Calu3 (cell line): ENCODE measurements at regions of chr3 and their contacts with region 1.

Region 1: GRCh38 chr3:184229394-184230080 is at the start of gene VWA5B2:
- DNase-seq: peak; percentile 92
- H3K4me3 Mint-ChIP-seq: peak within 1 kb of the TSS; percentile 8
- H3K27ac Mint-ChIP-seq: no peak within 1 kb of the TSS
- H3K4me1 Mint-ChIP-seq: peaks cover 8% of the 10 kb centered on the region
- H3K27me3 Mint-ChIP-seq: peaks cover 78% of the 10 kb centered on the region
- CTCF ChIP-seq: peak; percentile 62
- total RNA-seq, gene VWA5B2: 0.54 and 0.90 TPM in 2 replicates

Region 2: DNA sequence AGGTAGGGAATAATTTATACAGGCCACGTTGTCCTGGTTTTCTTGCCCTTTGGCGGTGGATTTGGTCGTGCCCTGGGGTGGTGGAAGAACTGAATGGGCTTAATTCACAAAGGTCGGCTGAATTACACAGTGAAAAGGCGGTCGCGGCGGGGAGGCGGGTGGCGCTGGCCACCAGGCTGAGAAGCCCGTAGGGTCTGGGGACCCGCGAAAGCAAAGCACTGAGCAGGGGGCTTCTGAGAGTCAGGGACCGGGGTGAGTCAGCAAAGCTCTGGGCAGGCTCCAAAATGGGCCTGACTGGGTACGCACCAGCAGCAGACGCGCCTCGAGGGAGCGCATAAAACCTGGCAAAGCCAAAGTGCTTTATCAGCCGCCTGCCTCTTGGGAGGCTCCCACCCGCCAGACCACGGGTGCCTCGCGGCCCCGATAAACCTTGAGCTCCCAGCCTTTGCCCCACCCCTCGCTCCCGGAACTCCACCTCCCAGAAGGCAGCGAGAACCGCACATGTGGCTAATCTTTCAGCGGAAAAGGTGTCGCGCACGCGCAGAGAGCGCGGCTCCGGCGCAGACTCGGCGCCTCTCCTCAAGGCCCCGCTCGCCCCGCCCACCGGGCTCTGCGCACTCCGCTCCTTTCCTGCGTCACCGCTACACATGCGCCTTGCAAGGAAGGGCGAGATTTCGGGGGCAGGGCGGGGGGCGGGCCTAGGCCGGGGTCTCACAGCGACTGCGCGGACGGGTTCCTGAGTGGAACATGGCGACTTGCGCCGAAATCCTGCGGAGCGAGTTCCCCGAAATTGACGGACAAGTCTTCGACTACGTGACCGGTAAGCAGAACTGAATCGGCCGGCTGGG is 43.9 kb before region 1 on chr3 and contains the start of gene ABCF3:
- CTCF ChIA-PET with region 1: interaction called, 9 read pairs
- intact Hi-C with region 1: loop called (anchors 2 kb)
- DNase-seq: peak; percentile 100
- H3K4me3 Mint-ChIP-seq: peak within 1 kb of the TSS; percentile 100
- H3K27ac Mint-ChIP-seq: peak within 1 kb of the TSS; percentile 96
- H3K4me1 Mint-ChIP-seq: peaks cover 27% of the 10 kb centered on the region
- H3K27me3 Mint-ChIP-seq: no peaks in the 10 kb centered on the region
- CTCF ChIP-seq: no peak
- total RNA-seq, gene ABCF3: 114 and 116 TPM in 2 replicates

Region 3: DNA sequence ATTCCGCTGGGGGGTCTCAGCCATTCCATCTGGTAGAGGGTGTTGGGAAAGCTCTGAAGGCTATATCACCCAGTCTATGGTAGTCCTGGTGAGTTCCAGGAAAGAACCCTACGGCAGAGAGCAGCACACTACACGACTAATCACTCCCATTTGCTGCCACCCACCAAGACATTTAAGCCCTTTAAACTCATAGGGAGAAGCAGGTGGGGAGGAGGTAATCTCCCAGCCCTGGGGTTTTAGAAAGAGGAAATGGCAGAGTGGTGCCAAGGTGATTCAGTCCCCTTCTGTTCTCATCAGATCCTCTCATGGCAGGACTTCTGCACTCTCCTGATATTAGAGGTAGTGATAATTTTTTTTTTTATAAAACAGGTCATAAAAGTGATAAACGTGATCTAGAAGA is 10.7 kb before region 1 on chr3:
- CTCF ChIA-PET with region 1: interaction called, 10 read pairs
- intact Hi-C with region 1: no loop called
- DNase-seq: no peak
- H3K4me3 Mint-ChIP-seq: no peak overlapping the region
- H3K27ac Mint-ChIP-seq: no peak overlapping the region
- H3K4me1 Mint-ChIP-seq: no peaks in the 10 kb centered on the region
- H3K27me3 Mint-ChIP-seq: peaks cover 28% of the 10 kb centered on the region
- CTCF ChIP-seq: no peak

Region 4: GRCh38 chr3:184241447-184242296 is 12.1 kb after region 1 on chr3:
- CTCF ChIA-PET with region 1: interaction called, 29 read pairs
- intact Hi-C with region 1: no loop called
- DNase-seq: peak; percentile 94
- H3K4me3 Mint-ChIP-seq: peak overlapping the region; percentile 56
- H3K27ac Mint-ChIP-seq: no peak overlapping the region
- H3K4me1 Mint-ChIP-seq: no peaks in the 10 kb centered on the region
- H3K27me3 Mint-ChIP-seq: peaks cover 39% of the 10 kb centered on the region
- CTCF ChIP-seq: peak; percentile 94

Region 5: DNA sequence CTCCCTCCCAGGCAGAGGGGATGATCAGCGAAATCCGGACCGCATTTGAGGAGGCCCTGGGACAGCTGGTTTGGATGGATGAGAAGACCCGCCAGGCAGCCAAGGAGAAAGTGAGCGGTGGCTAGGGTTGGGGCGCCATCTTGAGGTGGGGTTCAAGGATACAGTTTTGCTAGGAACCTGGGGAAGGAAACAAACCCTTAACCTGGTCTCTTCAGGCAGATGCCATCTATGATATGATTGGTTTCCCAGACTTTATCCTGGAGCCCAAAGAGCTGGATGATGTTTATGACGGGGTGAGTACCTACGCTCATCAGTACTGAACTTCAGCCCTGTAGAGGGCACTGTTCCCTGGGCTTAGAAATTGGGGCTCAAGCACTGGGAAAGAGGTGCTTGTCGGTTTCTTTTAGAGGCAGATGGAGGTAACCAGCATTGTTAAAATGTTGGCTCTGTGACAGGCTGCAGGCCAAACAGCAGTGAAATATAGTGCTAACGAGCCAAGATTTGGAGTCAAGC is 59.9 kb after region 1 on chr3:
- CTCF ChIA-PET with region 1: interaction called, 6 read pairs
- intact Hi-C with region 1: loop called (anchors 1 kb)
- DNase-seq: peak; percentile 90
- H3K4me3 Mint-ChIP-seq: no peak overlapping the region
- H3K27ac Mint-ChIP-seq: no peak overlapping the region
- H3K4me1 Mint-ChIP-seq: no peaks in the 10 kb centered on the region
- H3K27me3 Mint-ChIP-seq: peaks cover 72% of the 10 kb centered on the region
- CTCF ChIP-seq: peak; percentile 97

Region 6: DNA sequence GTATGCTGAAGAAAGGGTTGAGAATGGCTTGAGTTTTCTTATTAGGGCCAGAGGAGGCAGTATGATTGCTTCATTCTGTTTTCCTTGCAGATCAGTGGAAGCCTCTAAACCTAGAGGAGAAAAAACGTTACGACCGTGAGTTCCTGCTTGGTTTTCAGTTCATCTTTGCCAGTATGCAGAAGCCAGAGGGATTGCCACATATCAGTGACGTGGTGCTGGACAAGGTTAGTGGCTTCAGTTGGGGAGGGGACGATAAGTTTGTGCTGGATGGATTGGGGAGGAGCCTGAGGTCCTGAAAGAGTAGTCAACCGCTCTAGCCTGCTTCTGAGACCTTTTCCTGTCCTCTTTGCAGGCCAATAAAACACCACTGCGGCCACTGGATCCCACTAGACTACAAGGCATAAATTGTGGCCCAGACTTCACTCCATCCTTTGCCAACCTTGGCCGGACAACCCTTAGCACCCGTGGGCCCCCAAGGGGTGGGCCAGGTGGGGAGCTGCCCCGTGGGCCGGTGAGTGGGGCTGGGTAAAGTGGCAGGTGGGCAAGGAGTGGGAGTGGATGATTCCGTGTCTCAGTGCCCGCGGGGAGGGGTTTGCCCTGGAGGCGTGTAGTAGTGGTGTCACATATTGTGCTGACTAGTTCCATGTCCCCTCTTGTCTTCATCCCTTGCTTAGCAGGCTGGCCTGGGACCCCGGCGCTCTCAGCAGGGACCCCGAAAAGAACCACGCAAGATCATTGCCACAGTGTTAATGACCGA is 93.4 kb after region 1 on chr3:
- CTCF ChIA-PET with region 1: no interaction called
- intact Hi-C with region 1: no loop called
- DNase-seq: no peak
- H3K4me3 Mint-ChIP-seq: no peak overlapping the region
- H3K27ac Mint-ChIP-seq: peak overlapping the region; percentile 29
- H3K4me1 Mint-ChIP-seq: peaks cover 37% of the 10 kb centered on the region
- H3K27me3 Mint-ChIP-seq: no peaks in the 10 kb centered on the region
- CTCF ChIP-seq: no peak